ENCODE measurements at regions of chr10 and their contacts with region 1.

Region 1: DNA sequence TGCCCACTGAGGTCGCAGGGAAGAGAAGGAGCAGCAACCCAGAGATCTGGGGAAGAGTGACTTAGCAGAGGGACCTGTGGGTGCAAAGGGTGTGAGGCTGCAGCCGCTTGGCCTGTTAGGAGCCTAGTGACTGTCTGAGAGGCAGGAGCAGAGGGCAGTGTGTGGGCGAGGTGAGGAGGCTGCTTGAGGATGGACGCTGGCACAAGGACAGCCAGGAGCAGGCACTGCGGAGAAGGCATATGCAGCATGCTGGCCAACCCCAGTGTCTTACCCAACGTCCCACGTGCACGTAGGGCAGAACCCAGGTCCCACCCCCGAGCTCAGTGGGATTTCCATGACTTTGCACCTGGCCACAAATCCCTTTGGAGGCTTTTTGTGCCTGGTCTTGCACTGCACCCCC is 54.1 kb downstream of the C10orf105 start:
- DNase-seq: no peak
- ATAC-seq: no peak
- H3K4me3 ChIP-seq: no peak overlapping the region
- H3K27ac ChIP-seq: no peak overlapping the region
- H3K4me1 ChIP-seq: no peaks in the 10 kb centered on the region
- H3K27me3 ChIP-seq: no peaks in the 10 kb centered on the region
- CTCF ChIP-seq: no peak

Region 2: GRCh38 chr10:71517298-71518169 is 147.9 kb before region 1 on chr10:
- CTCF ChIA-PET with region 1: no interaction called
- POLR2A ChIA-PET with region 1: interaction called, 18 read pairs
- in situ Hi-C with region 1: no loop called
- intact Hi-C with region 1: no loop called
- DNase-seq: no peak
- ATAC-seq: no peak; the same call in 1 of the 2 replicates
- H3K4me3 ChIP-seq: no peak overlapping the region
- H3K27ac ChIP-seq: no peak overlapping the region
- H3K4me1 ChIP-seq: peaks cover 3% of the 10 kb centered on the region; the same call in 1 of the 2 replicates
- H3K27me3 ChIP-seq: peaks cover 3% of the 10 kb centered on the region
- CTCF ChIP-seq: no peak

Measured in Panc1 (cell line).